WTC11 (cell line): ENCODE measurements at regions of chr7 and their contacts with region 1.

Region 1: GRCh38 chr7:23373151-23374004 is 74.2 kb downstream of the MALSU1 start:
- DNase-seq: no peak
- ATAC-seq: no peak
- H3K4me3 Mint-ChIP-seq: no peak overlapping the region
- H3K27ac Mint-ChIP-seq: peak overlapping the region; percentile 59
- H3K4me1 Mint-ChIP-seq: peaks cover 47% of the 10 kb centered on the region
- H3K27me3 Mint-ChIP-seq: no peaks in the 10 kb centered on the region
- CTCF ChIP-seq: no peak

Region 2: DNA sequence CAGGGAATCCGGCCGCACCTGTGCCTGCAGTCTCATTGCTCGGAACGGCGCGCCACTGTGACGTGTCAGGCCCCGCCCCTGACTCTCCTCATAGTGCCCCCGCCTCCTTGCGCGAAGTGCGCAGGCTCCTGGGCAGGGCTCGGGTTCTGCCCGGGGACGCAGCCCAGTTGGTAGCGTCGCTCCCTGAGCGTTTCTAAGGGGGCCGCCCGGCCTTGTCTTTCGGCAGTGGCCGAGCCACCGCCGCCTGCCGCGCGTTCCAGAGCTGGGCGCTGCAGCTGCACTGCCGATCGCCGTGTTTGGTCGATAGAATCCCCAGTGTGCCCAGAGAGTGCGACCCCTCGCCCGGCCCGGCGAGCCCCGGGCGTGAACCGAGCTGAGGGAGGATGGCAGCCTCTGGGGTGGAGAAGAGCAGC is 267.7 kb before region 1 on chr7 and contains the start of gene KLHL7:
- CTCF ChIA-PET with region 1: no interaction called
- POLR2A ChIA-PET with region 1: interaction called, 10 read pairs
- DNase-seq: peak; percentile 99
- ATAC-seq: peak; percentile 93
- H3K4me3 Mint-ChIP-seq: peak within 1 kb of the TSS; percentile 98
- H3K27ac Mint-ChIP-seq: peak within 1 kb of the TSS; percentile 99
- H3K4me1 Mint-ChIP-seq: peaks cover 33% of the 10 kb centered on the region
- H3K27me3 Mint-ChIP-seq: no peaks in the 10 kb centered on the region
- CTCF ChIP-seq: no peak
- total RNA-seq, gene KLHL7: 65.9 to 82.1 TPM (median 69.2 TPM) in 3 replicates

Region 3: DNA sequence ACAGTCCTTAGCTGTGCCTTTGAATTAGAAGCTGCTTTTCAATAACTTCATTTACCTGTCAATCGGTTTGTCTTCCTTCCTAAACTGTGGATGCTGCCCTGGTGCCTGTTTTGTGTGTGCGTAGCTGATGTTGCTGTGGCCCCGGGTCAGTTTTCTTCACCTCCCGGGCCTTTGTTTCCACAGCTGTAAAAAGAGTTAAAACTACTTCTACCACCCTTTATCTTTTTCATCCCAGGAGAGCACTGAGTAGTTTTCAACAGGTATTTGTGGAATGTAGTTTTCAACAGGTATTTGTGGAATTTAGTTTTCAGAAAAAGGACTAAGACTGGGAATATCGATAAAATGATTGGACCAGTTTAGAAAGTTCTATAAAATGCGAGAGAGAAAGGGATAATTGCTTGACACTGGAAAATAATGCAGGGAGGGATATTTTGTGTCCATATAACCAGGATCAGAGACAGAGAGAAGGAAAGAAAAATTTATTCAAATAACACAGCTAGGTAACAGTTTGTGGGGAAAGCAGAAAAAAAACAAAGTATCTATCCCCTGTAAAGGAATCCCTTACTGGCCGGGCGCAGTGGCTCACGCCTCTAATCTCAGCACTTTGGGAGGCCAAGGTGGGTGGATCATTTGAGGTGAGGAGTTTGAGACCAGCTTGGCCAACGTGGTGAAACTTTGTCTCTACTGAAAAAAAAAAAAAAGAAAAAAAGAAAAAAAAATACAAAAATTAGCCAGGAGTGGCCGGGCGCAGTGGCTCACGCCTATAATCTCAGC is 112.8 kb after region 1 on chr7:
- CTCF ChIA-PET with region 1: no interaction called
- POLR2A ChIA-PET with region 1: no interaction called
- DNase-seq: no peak
- ATAC-seq: peak; percentile 46
- H3K4me3 Mint-ChIP-seq: no peak overlapping the region
- H3K27ac Mint-ChIP-seq: peak overlapping the region; percentile 78
- H3K4me1 Mint-ChIP-seq: peaks cover 32% of the 10 kb centered on the region
- H3K27me3 Mint-ChIP-seq: no peaks in the 10 kb centered on the region
- CTCF ChIP-seq: no peak